CD8-positive, alpha-beta T cell (primary cell): ENCODE measurements at regions of chr14 and their contacts with region 1.

Region 1: DNA sequence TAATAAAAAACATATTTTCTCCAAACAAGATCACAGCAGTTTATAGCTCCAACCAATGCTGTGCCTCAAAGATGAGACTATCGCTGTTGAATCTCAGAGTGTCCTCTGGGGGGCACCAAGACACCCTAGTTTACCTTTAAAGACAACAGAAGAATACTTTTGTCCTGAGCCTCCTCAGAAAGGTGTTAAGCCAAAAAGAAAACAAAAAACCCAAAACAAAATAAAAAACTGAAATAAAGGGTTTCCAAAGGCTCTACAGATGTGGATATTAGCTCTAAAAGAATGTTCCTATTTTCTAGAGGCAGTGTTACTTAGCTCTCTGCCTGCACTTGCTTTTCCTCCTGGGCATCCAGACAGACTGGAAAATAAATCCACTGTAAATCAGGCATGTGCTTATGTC is 86.9 kb upstream of the TTC7B start:
- DNase-seq: peak; percentile 12 to 77 (median 59)
- ATAC-seq: peak; percentile 83
- H3K4me3 ChIP-seq: no peak overlapping the region
- H3K4me3 Mint-ChIP-seq: no peak overlapping the region
- H3K27ac ChIP-seq: no peak overlapping the region
- H3K27ac Mint-ChIP-seq: no peak overlapping the region
- H3K4me1 ChIP-seq: no peaks in the 10 kb centered on the region
- H3K4me1 Mint-ChIP-seq: no peaks in the 10 kb centered on the region
- H3K27me3 ChIP-seq: no peaks in the 10 kb centered on the region
- H3K27me3 Mint-ChIP-seq: no peaks in the 10 kb centered on the region
- CTCF ChIP-seq: peak; percentile 83

Region 2: DNA sequence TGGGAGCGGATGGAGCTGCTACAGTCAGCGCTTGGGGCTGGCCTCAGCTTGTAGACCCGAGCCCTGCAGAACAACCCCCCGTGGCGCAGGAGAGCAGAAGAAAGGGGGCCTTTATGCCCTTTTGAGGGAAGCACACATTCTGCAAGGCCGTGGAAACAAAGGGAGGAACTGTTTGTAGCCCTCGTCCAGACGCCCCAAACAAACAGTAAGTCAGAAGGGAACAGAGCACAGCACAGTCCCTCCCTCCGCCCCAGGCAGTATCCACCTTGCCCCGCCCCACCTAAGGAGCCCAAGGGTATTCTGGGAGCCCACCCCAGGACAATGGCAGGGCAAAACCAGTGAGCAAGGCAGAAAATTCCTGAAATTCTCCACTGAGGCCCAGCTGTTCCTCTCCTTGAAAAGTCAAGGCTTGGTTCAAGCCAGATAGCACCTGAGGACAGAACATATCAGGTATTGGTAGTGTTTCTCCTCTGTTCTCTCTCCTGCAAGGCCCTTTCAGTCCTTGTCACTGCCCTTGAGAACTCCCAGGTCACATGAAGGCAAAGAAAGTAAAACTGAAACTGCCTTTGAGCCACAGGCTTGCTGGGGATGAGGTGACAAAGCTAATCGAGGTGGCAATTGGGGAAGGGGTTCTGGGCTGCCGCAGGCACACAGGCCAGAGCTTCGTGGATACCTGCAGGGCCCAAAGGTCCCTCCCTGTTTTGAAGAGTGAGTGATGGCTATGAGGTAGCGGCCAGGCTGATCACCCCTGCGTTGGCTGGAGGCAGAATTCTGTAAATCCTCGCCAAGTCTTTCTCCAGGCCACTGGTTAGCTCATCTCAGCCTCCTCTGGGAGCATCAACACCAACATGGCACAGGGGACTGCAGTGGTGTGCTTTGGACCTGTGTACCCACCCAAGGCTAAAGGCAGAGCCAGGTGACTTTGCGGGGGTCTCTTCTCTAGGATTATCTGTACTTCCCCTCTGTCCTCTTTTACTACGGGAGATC is 211.3 kb after region 1 on chr14:
- CTCF ChIA-PET with region 1: interaction called, 13 read pairs
- POLR2A ChIA-PET with region 1: interaction called, 3 read pairs
- intact Hi-C with region 1: no loop called
- DNase-seq: peak; percentile 22 to 89 (median 65)
- ATAC-seq: peak; percentile 78
- H3K4me3 ChIP-seq: peak overlapping the region; percentile 68 to 93
- H3K4me3 Mint-ChIP-seq: peak overlapping the region; percentile 90
- H3K27ac ChIP-seq: peak overlapping the region; percentile 84 to 88
- H3K27ac Mint-ChIP-seq: peak overlapping the region; percentile 95
- H3K4me1 ChIP-seq: peaks cover 61% of the 10 kb centered on the region
- H3K4me1 Mint-ChIP-seq: peaks cover 68% of the 10 kb centered on the region
- H3K27me3 ChIP-seq: no peaks in the 10 kb centered on the region
- H3K27me3 Mint-ChIP-seq: no peaks in the 10 kb centered on the region
- CTCF ChIP-seq: no peak

Region 3: DNA sequence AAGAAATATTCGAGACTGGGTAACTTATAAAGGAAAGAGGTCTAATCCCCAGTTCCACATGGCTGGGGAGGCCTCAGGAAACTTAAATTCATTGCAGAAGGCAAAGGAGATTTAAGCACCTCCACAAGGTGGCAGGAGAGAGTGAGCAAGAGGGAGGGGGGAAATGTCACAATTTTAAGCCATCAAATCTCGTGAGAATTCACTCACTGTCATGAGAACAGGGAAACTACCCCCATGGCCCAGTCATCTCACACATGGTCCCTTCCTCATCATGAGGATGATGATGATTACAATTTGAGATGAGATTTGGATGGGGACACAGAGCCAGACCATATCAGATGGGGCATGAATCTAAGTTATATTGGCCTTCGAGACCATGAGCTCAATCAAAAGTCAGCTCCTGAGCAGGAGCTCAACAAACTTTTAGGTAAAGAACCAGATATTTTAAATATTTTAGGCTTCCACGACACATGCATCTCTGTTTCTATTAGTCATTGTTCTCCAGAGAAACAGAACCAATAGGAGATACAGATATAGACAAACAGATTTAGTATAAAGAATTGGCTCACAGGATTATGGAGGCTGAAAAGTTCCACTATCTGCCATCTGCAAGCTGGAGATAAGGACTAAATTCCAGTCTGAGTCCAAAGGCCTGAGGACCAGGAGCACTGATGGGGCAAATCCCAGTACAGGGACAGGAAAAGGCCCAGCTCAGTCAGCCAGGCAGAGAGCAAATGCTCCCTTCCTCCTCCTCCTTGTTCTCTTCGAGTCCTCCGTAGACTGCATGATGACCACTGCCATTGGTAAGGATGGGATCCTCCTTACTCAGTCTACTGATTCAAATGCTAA is 235.6 kb after region 1 on chr14:
- CTCF ChIA-PET with region 1: interaction called, 24 read pairs
- POLR2A ChIA-PET with region 1: no interaction called
- intact Hi-C with region 1: loop called in 1 of 2 experiments (anchors 10 kb)
- DNase-seq: peak in 7 of 9 experiments; percentile 19 to 74 (median 41)
- ATAC-seq: peak; percentile 72
- H3K4me3 ChIP-seq: no peak overlapping the region
- H3K4me3 Mint-ChIP-seq: no peak overlapping the region
- H3K27ac ChIP-seq: no peak overlapping the region
- H3K27ac Mint-ChIP-seq: peak overlapping the region; percentile 22
- H3K4me1 ChIP-seq: peaks cover 8% of the 10 kb centered on the region
- H3K4me1 Mint-ChIP-seq: peaks cover 24% of the 10 kb centered on the region
- H3K27me3 ChIP-seq: no peaks in the 10 kb centered on the region
- H3K27me3 Mint-ChIP-seq: no peaks in the 10 kb centered on the region
- CTCF ChIP-seq: peak; percentile 54

Region 4: GRCh38 chr14:91164685-91165084 is 261.6 kb after region 1 on chr14:
- CTCF ChIA-PET with region 1: interaction called, 330 read pairs
- POLR2A ChIA-PET with region 1: no interaction called
- intact Hi-C with region 1: no loop called
- DNase-seq: no peak
- ATAC-seq: no peak
- H3K4me3 ChIP-seq: no peak overlapping the region
- H3K4me3 Mint-ChIP-seq: no peak overlapping the region
- H3K27ac ChIP-seq: no peak overlapping the region
- H3K27ac Mint-ChIP-seq: no peak overlapping the region
- H3K4me1 ChIP-seq: no peaks in the 10 kb centered on the region
- H3K4me1 Mint-ChIP-seq: no peaks in the 10 kb centered on the region
- H3K27me3 ChIP-seq: no peaks in the 10 kb centered on the region
- H3K27me3 Mint-ChIP-seq: no peaks in the 10 kb centered on the region
- CTCF ChIP-seq: no peak